ENCODE measurements at regions of chr16 and their contacts with region 1.

Region 1: DNA sequence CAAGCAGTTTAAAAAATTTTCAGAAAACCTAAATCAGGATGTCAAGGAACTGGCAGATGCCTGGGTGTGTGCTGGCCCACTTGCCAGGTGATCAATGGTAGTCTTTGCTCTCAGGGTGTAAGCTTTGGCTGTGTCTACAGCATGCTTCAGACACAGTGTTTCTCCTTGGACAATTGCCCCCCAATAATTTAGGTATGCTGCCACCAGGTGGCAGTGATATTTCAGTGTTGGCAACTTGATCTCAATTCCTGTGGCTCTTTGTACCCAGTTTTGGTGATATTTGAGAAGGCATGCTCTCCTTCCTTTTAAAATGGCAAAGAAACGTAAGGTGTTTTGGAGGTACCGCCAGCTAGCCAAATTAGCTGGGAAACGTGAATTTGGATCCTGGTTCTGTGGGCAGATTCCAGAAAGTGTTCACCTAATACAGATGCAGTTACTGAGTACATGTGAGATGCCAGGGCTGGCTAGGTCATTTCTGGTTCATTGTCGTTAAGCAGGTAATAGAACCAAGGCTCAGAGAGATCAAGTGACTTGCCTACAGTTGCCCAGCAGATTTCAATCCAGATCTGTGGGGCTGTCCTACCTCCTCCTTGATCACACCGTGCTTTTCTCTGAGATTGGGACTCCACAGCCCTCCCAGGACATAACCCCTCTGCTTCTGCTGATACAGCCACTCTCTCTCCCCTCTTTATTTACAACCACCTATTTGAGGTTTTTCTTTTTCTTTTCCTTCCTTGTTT is 155.6 kb upstream of the PLCG2 start:
- DNase-seq: peak; percentile 65 to 73
- ATAC-seq: peak; percentile 35 to 59; a peak in 3 of 6 replicates
- H3K4me3 ChIP-seq: no peak overlapping the region
- H3K27ac ChIP-seq: peak overlapping the region; percentile 70 to 76
- H3K4me1 ChIP-seq: peaks cover 41% of the 10 kb centered on the region
- CTCF ChIP-seq: peak; percentile 74
- EP300 ChIP-seq: no peak
- POLR2A ChIP-seq: no peak
- RAD21 ChIP-seq: peak; percentile 78 to 83

Region 2: GRCh38 chr16:81612351-81613163 is 11.0 kb before region 1 on chr16:
- CTCF ChIA-PET with region 1: interaction called, 21 read pairs
- POLR2A ChIA-PET with region 1: no interaction called
- DNase-seq: no peak
- ATAC-seq: no peak
- H3K4me3 ChIP-seq: no peak overlapping the region
- H3K27ac ChIP-seq: peak overlapping the region in 1 of 2 experiments; percentile 74; a peak in 1 of 6 replicates
- H3K4me1 ChIP-seq: peaks cover 30% of the 10 kb centered on the region
- CTCF ChIP-seq: no peak
- EP300 ChIP-seq: no peak
- POLR2A ChIP-seq: no peak
- RAD21 ChIP-seq: no peak

Region 3: DNA sequence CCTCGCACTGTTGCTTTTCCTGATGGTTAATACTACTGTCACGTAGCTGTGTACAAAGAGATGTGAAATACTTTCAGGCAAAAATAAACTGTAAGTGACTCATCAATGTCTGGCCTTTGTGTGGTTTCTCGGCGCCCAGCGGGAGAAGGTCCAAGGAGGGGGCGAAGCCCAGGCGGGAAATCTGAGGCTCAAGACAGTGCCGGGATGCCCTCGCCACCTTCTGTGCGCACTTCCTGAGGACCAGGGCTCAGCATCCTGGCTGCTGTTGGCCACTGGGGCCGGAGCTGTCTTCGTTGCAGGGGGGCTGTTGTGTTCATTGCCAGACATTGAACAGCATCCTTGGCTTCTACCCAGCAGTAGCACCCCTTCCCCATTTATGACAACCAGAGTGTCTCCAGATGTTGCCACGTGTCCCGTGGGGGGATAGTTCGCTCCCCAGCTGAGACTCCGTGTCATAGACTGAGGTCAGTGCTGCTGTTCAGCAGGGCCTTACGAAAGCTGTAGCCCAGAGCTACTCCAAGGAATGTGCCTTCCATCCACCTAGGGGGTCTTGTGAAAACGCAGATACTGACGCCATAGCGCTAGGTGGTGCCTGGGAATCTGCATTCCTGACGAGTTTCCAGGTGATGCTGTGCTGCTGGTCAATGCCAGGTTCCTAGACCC is 88.3 kb after region 1 on chr16:
- CTCF ChIA-PET with region 1: interaction called, 23 read pairs
- POLR2A ChIA-PET with region 1: no interaction called
- DNase-seq: peak; percentile 92 to 97
- ATAC-seq: peak; percentile 77 to 82
- H3K4me3 ChIP-seq: no peak overlapping the region
- H3K27ac ChIP-seq: peak overlapping the region; percentile 94 to 97
- H3K4me1 ChIP-seq: peaks cover 71% of the 10 kb centered on the region
- CTCF ChIP-seq: no peak
- EP300 ChIP-seq: peak; percentile 98 to 100
- POLR2A ChIP-seq: no peak
- RAD21 ChIP-seq: peak; percentile 4 to 28; a peak in 3 of 5 replicates

Region 4: GRCh38 chr16:81730090-81731051 is 106.8 kb after region 1 on chr16:
- CTCF ChIA-PET with region 1: interaction called, 40 read pairs
- POLR2A ChIA-PET with region 1: no interaction called
- DNase-seq: peak; percentile 95
- ATAC-seq: peak; percentile 97
- H3K4me3 ChIP-seq: peak overlapping the region; percentile 16; the same call in 1 of the 3 replicates
- H3K27ac ChIP-seq: peak overlapping the region; percentile 84 to 91
- H3K4me1 ChIP-seq: peaks cover 26% of the 10 kb centered on the region
- CTCF ChIP-seq: peak; percentile 57
- EP300 ChIP-seq: peak; percentile 64 to 81; a peak in 3 of 5 replicates
- POLR2A ChIP-seq: no peak
- RAD21 ChIP-seq: peak; percentile 35 to 38; a peak in 2 of 5 replicates

Measured in A549 (cell line).